Aorta (tissue), 5 donors: ENCODE measurements at regions of chr3 and their contacts with region 1.

Region 1: DNA sequence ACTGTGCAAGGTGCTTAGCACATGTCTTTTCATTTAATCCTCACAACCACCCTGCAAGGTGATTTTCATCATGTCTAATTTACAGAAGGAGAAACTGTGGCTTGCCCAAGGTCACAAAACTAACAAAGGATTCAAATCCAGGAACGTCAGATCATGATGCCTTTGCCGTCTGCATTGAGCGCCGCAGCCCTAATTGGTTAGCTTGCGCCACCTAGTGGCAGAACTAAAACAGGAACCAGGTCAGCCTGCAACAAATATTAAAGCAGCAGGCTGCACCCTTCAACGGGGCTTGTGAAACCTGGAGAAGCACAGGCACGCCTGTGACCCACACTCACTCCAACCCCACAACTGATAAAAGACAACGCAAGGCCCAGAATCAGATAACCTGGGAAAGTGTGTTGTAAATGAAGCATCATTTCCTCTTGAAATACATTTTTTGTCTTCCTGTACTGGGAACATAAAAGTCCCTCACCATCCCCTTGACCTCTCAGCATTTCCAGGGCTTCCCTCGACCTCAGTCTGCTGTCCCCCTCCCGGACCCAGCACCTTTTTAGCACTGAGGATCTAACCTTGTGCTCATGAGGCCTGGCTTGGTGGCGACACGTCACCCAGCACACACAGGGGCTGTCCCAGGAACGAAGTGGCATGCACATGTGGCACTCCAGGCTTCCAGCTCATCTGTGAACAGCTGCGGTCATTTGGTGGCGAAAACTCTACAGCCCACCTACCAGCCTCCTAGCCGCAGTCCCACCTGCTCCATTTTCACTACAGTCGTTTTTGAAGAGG is 17.3 kb downstream of the DPH3 start:
- DNase-seq: peak; percentile 83 to 85
- ATAC-seq: peak; percentile 86
- H3K4me3 ChIP-seq: no peak overlapping the region
- H3K27ac ChIP-seq: no peak overlapping the region
- H3K4me1 ChIP-seq: peaks cover 0 to 2% of the 10 kb centered on the region in 2 donors
- H3K27me3 ChIP-seq: no peaks in the 10 kb centered on the region

Region 2: GRCh38 chr3:15629860-15630597 is 617.4 kb before region 1 on chr3:
- intact Hi-C with region 1: loop called (anchors 5 kb)
- DNase-seq: peak in 1 of 2 donors; percentile 56
- ATAC-seq: peak; percentile 87
- H3K4me3 ChIP-seq: peak overlapping the region; percentile 30 to 46
- H3K27ac ChIP-seq: no peak overlapping the region
- H3K4me1 ChIP-seq: peaks cover 0 to 3% of the 10 kb centered on the region in 2 donors
- H3K27me3 ChIP-seq: no peaks in the 10 kb centered on the region

Region 3: DNA sequence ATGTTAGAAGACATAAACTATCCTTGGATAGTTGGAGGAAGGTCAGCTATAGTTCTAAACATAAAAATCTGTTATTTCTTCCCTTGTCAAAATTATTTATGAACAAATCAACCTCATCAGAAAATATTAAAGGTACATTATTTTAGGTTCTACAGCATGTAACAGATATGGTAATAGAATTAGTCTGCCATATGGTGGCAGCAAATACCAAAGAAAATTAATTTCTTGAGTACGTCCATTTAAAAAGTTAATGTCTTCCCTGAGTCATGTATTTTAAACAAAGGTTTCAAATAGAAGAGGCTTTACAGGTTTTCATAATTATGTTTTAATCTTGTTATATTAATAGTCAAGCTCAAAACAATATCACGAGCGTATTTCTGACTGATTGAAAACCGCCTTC is 431.8 kb before region 1 on chr3:
- intact Hi-C with region 1: loop called (anchors 2 to 5 kb)
- DNase-seq: no peak
- ATAC-seq: no peak
- H3K4me3 ChIP-seq: no peak overlapping the region
- H3K27ac ChIP-seq: no peak overlapping the region
- H3K4me1 ChIP-seq: no peaks in the 10 kb centered on the region
- H3K27me3 ChIP-seq: no peaks in the 10 kb centered on the region

Region 4: DNA sequence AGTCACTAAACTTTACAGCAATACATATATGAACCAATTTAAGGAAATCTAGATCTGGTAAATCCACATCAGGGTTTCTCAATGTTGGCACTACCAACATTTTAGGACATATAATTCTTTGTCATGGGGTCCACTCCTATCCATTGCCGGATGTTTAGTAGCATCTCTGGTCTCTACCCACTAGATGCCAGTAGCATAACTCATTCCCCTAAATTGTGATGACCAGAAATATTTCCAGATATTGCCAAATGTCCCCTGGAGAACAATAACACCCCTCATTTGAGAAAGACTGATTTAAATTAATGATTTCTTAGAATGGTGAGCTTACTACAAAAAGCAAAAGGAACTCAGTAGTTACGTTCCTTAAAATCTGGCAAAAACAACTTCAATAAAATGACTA is 426.6 kb before region 1 on chr3:
- intact Hi-C with region 1: loop called (anchors 2 to 5 kb)
- DNase-seq: no peak
- ATAC-seq: no peak
- H3K4me3 ChIP-seq: no peak overlapping the region
- H3K27ac ChIP-seq: no peak overlapping the region
- H3K4me1 ChIP-seq: peaks cover 0 to 9% of the 10 kb centered on the region in 2 donors
- H3K27me3 ChIP-seq: no peaks in the 10 kb centered on the region

Region 5: DNA sequence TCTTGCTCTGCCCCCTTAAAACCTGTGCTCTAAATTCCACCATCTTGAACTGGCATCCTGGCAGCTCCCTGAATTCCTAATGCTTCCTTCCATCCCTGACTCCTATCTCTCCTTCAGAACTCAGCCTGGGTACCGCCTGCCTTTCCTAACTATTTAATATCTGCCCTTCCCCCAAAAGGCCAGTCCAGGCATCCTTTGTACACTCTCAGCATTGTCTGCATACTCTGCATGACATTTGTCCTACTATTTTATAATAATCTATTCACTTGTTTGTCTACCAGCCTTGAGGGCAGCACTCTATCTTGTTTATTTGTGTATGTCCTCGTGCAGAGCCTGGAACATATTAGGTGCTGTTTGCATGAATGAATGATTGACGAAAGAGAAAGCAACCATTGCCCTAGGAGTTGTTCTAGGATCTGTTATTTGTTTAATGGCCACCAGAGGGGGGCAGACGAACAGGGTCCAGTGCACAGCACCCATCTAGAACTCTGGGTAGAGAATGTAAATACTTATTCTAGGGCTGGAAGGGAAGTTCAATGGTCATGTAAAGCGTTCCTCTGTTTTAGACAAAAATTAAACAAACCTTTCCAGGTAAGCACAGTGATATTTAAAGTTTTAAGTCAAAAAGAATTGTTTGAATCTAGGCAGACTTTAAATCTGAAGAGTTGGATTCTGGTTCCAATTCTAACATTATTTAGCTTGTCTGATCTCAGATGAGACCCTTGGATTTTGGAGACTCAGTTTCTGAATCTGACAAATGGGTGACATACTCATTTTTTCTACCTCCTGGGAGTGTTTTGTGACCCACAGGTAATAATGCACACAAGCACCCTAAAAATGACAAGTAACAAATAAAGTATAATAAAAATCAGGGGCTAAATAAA is 198.8 kb before region 1 on chr3:
- intact Hi-C with region 1: loop called (anchors 1 to 5 kb)
- DNase-seq: no peak
- ATAC-seq: peak; percentile 87
- H3K4me3 ChIP-seq: no peak overlapping the region
- H3K27ac ChIP-seq: no peak overlapping the region
- H3K4me1 ChIP-seq: no peaks in the 10 kb centered on the region
- H3K27me3 ChIP-seq: no peaks in the 10 kb centered on the region

Region 6: DNA sequence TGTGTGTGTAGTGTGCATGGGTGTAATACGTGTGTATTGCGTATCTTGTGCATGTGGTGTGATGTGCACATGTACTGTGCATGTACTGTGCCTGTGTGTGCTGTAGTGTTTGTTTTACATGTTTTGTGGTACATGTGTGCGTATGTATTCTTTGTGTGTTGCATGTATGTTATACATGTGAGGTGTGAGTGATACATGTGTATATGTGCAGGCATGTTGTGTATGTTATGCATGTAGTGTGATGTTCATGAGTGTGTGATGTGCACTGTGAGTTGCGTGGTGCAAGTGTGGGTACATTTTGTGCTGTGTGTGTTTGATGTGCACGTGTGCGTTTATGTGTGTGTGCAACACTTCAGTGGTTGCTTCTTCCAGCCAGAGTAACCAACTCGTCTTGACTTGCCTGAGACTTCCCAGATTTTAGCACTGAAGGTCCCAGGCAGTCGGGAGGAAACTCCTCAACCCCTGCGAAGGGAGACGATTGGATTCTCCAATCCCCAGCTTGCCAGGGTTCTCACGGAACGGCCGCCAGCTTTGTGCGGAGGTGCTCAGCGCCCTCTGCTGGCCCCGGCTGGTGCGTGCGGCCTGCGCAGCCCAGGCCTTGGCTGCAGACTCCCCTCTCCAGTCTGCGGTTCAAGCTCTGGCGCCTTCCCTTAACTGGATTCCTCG is 69.4 kb before region 1 on chr3:
- intact Hi-C with region 1: loop called in 1 of 2 experiments (anchors 5 kb)
- DNase-seq: peak; percentile 90 to 94
- ATAC-seq: peak; percentile 79
- H3K4me3 ChIP-seq: peak overlapping the region in 1 of 2 donors; percentile 20
- H3K27ac ChIP-seq: no peak overlapping the region
- H3K4me1 ChIP-seq: peaks cover 0 to 2% of the 10 kb centered on the region in 2 donors
- H3K27me3 ChIP-seq: no peaks in the 10 kb centered on the region